ENCODE measurements at regions of chr20 and their contacts with region 1.

Region 1: GRCh38 chr20:17898548-17898994 is 70.0 kb downstream of the SNX5 start:
- DNase-seq: peak in 1 of 2 donors; percentile 86
- H3K4me3 ChIP-seq: no peak overlapping the region
- H3K27ac ChIP-seq: no peak overlapping the region
- H3K4me1 ChIP-seq: peaks cover 0 to 15% of the 10 kb centered on the region in 2 donors
- H3K27me3 ChIP-seq: no peaks in the 10 kb centered on the region
- CTCF ChIP-seq: peak; percentile 88 to 96 (median 94)

Region 2: DNA sequence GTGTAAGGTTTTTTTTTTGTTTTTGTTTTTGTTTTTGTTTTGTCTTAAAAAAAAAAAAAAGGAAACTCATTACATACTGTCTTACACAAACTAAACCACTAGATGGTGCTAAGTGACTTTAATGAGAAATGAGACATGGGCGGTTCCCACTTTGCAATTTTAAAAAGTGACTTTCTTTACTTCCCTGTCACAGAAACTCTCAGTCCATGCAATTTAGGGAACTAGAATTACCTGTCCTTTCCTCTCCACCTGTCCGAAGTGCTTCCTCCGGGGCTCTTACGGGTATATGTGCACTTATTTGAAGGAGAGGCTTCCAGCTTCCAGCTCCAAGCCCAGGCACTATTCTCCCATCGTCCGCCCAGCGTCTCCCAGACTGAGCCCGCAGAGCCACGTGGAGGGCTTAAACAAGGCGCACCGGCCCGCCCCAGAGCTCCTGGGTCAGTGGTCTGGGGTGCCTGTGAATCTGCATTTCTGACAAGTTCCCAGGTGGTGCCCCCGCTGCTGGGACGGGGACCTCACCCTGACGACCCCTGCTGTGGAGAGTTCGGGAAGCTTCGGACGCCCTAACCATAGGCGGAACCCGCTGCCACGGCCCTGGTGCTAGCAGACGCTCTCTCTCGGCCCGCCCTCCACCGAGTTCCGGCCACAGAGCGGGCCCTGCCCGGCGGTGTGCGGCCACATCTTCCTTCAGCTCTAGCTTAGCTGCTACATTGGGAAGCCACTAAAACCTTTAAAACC is 393.5 kb before region 1 on chr20:
- intact Hi-C with region 1: loop called (anchors 1 kb)
- DNase-seq: no peak
- H3K4me3 ChIP-seq: peak overlapping the region; percentile 60 to 65
- H3K27ac ChIP-seq: no peak overlapping the region
- H3K4me1 ChIP-seq: peaks cover 0 to 6% of the 10 kb centered on the region in 2 donors
- H3K27me3 ChIP-seq: no peaks in the 10 kb centered on the region
- CTCF ChIP-seq: peak; percentile 30 to 76 (median 74)

Region 3: DNA sequence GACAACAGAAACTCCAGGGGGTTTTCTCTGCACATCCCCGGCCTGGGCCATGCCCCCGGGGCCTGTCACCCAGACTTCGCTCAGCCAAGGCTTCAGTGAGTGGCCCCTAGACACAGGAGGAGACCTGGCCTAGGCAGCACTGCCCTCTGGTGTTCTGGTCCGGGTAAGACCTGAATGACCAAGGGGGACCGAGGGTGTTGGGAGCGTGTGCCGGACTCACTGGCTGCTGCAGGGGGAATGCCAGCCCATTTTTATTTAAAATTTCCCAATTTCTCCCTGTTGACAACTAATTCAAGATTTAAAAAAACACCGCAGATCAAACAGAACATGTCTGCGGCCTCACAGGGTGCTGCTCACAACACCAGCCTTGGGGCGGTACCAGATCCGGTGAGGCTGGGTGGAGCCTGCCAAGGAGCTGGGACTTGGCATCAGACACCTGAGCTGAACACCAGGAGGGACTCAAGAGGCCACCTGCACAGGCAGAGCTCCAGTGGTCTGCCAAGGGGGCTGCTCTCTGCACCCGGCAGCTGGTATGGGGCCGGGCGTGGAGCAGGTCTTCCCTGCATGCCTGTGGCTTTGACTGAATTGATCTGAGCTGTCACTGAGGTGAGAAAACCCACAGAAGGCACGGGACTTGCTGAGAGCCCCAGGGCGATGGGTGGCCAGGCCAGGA is 280.9 kb before region 1 on chr20:
- intact Hi-C with region 1: loop called (anchors 5 kb)
- DNase-seq: peak in 1 of 2 donors; percentile 84
- H3K4me3 ChIP-seq: no peak overlapping the region
- H3K27ac ChIP-seq: peak overlapping the region; percentile 18 to 25
- H3K4me1 ChIP-seq: peaks cover 12 to 35% of the 10 kb centered on the region in 2 donors
- H3K27me3 ChIP-seq: no peaks in the 10 kb centered on the region
- CTCF ChIP-seq: peak; percentile 78 to 90 (median 80)

Region 4: GRCh38 chr20:17693444-17694001 is 205.0 kb before region 1 on chr20:
- intact Hi-C with region 1: no loop called
- DNase-seq: no peak
- H3K4me3 ChIP-seq: peak overlapping the region in 1 of 2 donors; percentile 30
- H3K27ac ChIP-seq: no peak overlapping the region
- H3K4me1 ChIP-seq: peaks cover 0 to 2% of the 10 kb centered on the region in 2 donors
- H3K27me3 ChIP-seq: no peaks in the 10 kb centered on the region
- CTCF ChIP-seq: no peak

Region 5: GRCh38 chr20:17796091-17796563 is 102.4 kb before region 1 on chr20:
- intact Hi-C with region 1: loop called (anchors 1 kb)
- DNase-seq: peak; percentile 26 to 84
- H3K4me3 ChIP-seq: no peak overlapping the region
- H3K27ac ChIP-seq: peak overlapping the region; percentile 72 to 83
- H3K4me1 ChIP-seq: peaks cover 0 to 26% of the 10 kb centered on the region in 2 donors
- H3K27me3 ChIP-seq: no peaks in the 10 kb centered on the region
- CTCF ChIP-seq: no peak

Region 6: GRCh38 chr20:17843246-17844132 is 55.1 kb before region 1 on chr20:
- intact Hi-C with region 1: loop called (anchors 2 kb)
- DNase-seq: peak; percentile 27 to 93
- H3K4me3 ChIP-seq: no peak overlapping the region
- H3K27ac ChIP-seq: peak overlapping the region; percentile 85 to 88
- H3K4me1 ChIP-seq: peaks cover 15 to 29% of the 10 kb centered on the region in 2 donors
- H3K27me3 ChIP-seq: no peaks in the 10 kb centered on the region
- CTCF ChIP-seq: no peak

Region 7: DNA sequence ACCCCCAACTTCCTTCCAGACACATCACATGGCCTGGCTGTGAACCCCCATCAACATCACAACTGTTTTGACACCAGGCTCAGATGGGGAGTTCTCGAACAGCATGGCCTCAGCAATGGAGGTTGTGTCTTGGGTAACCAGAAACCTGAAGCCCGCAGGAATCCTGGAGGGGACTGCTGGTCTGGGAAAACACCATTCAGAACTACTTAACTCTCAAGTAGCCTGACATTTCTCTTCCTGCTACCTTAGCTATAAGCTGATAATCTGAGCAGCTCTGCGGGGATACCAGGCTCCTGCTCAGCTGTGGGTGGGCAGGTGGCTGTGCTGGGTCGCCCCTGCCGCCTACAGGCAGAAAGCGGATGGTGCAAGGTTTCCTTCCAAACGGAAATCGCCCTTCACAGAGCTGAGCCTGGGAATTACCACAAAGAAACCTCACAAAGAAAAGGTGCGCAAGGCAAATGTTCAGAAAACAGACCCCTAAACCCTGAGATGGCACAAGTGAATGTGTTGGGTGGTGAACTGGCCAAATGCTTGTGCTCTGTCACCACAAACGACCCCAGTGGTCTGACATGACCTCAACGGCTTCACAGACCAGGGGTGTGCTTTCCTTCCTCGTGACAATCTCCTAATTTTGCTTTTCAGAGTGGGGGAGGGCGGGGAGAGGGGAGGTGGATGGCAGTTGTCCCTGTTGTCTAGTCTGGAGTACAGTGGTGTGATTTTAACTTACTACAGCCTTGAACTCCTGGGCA is 40.5 kb after region 1 on chr20:
- intact Hi-C with region 1: loop called (anchors 5 kb)
- DNase-seq: peak; percentile 18 to 79
- H3K4me3 ChIP-seq: no peak overlapping the region
- H3K27ac ChIP-seq: peak overlapping the region; percentile 33 to 73
- H3K4me1 ChIP-seq: peaks cover 10 to 30% of the 10 kb centered on the region in 2 donors
- H3K27me3 ChIP-seq: no peaks in the 10 kb centered on the region
- CTCF ChIP-seq: peak; percentile 85 to 92 (median 90)

Region 8: DNA sequence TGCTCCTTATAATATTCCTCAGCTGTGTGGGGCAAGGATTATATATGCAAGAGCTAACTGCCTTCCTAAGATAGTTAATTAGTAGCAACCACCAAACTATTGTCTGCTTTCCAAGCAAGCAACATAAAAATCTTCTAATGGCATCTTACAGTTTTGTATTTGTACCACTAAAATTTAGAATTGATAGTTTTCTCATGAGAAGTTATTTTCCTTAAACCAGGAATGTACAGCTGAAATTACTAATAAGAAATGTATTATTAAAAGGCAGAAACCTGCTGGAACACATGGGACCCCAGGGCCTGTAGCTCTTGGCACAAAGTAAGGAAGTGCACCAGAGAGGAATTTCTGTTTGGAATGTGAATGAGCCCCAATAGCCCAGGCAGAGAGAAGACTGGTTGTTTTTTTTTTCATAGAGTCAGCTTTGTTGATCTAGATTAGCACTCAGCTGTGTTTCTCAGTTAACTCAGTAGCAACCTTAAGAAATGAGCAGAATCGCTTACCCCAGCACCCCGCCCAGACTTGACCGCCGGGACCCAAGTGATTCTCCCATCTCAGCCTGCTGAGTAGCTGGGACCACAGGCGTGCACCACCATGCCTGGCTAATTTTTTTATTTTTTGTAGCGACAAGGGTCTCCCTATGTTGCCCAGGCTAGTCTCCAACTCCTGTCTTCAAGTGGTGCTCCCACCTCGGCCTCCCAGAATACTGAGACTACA is 72.9 kb after region 1 on chr20:
- intact Hi-C with region 1: no loop called
- DNase-seq: no peak
- H3K4me3 ChIP-seq: peak overlapping the region; percentile 11 to 79
- H3K27ac ChIP-seq: peak overlapping the region; percentile 94 to 96
- H3K4me1 ChIP-seq: peaks cover 4 to 18% of the 10 kb centered on the region in 2 donors
- H3K27me3 ChIP-seq: no peaks in the 10 kb centered on the region
- CTCF ChIP-seq: no peak

Measured in ascending aorta (tissue), 2 donors.